Activated T-helper 1 cell treated with anti-CD3 and anti-CD28 coated beads, Interleukin-12 subunit alpha, Interleukin-12 subunit beta, Interleukin-2, Interleukin-4 antibody, amounts not matched to agents 30 ng/mL and 10 ng/mL and 1 ng/mL, durations not matched to agents 14 hours and 24 hours and 36 hours (primary cell): ENCODE measurements at regions of chr1 and their contacts with region 1.

Region 1: GRCh38 chr1:71676979-71677930 is 596.4 kb upstream of the ZRANB2 start:
- DNase-seq: no peak
- H3K4me3 Mint-ChIP-seq: no peak overlapping the region
- H3K27ac Mint-ChIP-seq: no peak overlapping the region
- H3K4me1 Mint-ChIP-seq: no peaks in the 10 kb centered on the region
- H3K27me3 Mint-ChIP-seq: no peaks in the 10 kb centered on the region

Region 2: GRCh38 chr1:72075425-72075824 is 398.2 kb after region 1 on chr1:
- intact Hi-C with region 1: no loop called
- DNase-seq: no peak
- H3K4me3 Mint-ChIP-seq: no peak overlapping the region
- H3K27ac Mint-ChIP-seq: no peak overlapping the region
- H3K4me1 Mint-ChIP-seq: no peaks in the 10 kb centered on the region
- H3K27me3 Mint-ChIP-seq: no peaks in the 10 kb centered on the region

Region 3: DNA sequence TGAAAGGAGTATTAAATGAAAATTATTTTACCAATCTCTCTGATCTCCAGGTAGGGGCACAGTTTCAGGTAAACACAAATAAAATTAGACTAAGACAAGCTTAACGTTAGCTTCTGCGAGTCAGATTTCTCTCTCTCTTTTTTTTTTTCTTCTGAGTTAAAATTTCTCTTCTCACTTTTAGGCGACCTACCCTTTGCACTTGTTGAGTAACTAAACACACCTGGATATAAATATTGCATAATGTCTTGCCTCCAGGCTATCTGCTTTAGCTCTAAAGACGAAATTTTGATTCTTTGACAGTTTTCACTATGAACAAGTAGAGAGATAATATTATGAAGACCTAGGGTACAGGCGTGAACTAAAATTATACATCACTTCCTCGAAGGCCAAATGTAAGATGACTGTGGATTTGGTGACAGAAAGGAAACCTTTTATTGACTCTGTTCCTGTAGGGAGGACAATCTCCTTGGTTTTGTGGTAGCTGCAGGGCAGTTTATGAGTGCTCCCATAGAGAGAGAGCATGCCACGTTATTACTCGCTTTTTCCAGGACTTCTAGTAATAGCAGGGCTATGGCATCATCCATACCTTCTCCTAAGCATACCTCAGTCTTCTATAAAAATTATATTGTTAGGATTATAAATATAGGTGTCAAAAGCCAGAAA is 908.9 kb after region 1 on chr1:
- intact Hi-C with region 1: loop called (anchors 5 kb)
- DNase-seq: no peak
- H3K4me3 Mint-ChIP-seq: no peak overlapping the region
- H3K27ac Mint-ChIP-seq: no peak overlapping the region
- H3K4me1 Mint-ChIP-seq: no peaks in the 10 kb centered on the region
- H3K27me3 Mint-ChIP-seq: no peaks in the 10 kb centered on the region